HepG2 (cell line): ENCODE measurements at regions of chr9 and their contacts with region 1.

Region 1: GRCh38 chr9:36023260-36024048 is 13.3 kb upstream of the RECK start:
- DNase-seq: peak; percentile 39
- ATAC-seq: peak; percentile 90
- H3K4me3 ChIP-seq: no peak overlapping the region
- H3K27ac ChIP-seq: no peak overlapping the region
- H3K4me1 ChIP-seq: no peaks in the 10 kb centered on the region; the same call in 1 of the 2 replicates
- H3K27me3 ChIP-seq: no peaks in the 10 kb centered on the region
- CTCF ChIP-seq: peak; percentile 86
- EP300 ChIP-seq: no peak
- POLR2A ChIP-seq: no peak
- RAD21 ChIP-seq: peak; percentile 71

Region 2: DNA sequence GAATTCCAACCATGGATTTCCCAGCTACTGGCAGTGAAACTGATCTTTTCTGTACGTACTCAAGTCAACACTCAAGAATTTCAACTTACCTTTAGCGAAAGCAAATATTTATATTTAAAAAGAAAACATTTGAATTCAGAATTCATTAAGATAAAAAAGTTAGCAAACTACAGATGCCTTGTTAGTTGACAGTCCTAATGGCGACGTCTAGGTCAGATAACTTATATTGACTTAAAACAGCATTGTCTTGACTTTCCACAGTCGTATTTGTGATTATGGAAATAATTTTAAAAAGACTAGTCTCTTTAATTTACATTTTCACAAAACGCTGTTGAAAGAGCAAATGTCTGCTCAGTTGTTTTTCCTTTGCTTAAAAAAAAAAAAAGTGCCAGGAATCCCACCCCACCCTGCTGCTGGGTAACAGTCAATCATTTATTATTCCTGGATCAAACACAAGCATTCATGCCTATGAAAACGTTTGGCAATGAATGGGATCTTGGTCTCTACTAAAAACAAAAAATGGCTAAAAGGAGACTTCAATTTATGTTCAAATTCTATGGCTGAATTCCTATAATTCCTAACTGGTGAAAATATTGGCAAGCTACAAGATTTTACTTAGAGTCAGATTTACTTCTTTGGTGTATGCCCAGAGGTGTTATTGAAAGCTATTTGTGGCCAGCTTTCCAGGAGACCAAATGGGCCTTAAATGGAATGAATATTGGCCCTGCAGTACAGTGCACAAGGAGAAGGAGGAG is 87.5 kb before region 1 on chr9:
- CTCF ChIA-PET with region 1: no interaction called
- POLR2A ChIA-PET with region 1: no interaction called
- in situ Hi-C with region 1: no loop called
- intact Hi-C with region 1: no loop called
- DNase-seq: no peak
- ATAC-seq: no peak
- H3K4me3 ChIP-seq: no peak overlapping the region
- H3K27ac ChIP-seq: no peak overlapping the region
- H3K4me1 ChIP-seq: peaks cover 6% of the 10 kb centered on the region
- H3K27me3 ChIP-seq: peaks cover 0 to 6% of the 10 kb centered on the region in 2 experiments; a peak in 2 of 5 replicates
- CTCF ChIP-seq: no peak
- EP300 ChIP-seq: no peak
- POLR2A ChIP-seq: no peak
- RAD21 ChIP-seq: no peak

Region 3: GRCh38 chr9:35954942-35955546 is 68.4 kb before region 1 on chr9:
- CTCF ChIA-PET with region 1: interaction called, 17 read pairs
- POLR2A ChIA-PET with region 1: no interaction called
- in situ Hi-C with region 1: loop called (anchors 5 kb)
- intact Hi-C with region 1: loop called (anchors 2 kb)
- DNase-seq: peak; percentile 56
- ATAC-seq: peak; percentile 78
- H3K4me3 ChIP-seq: no peak overlapping the region
- H3K27ac ChIP-seq: no peak overlapping the region
- H3K4me1 ChIP-seq: no peaks in the 10 kb centered on the region
- H3K27me3 ChIP-seq: peaks cover 0 to 8% of the 10 kb centered on the region in 2 experiments; a peak in 3 of 5 replicates
- CTCF ChIP-seq: peak; percentile 85
- EP300 ChIP-seq: no peak
- POLR2A ChIP-seq: no peak
- RAD21 ChIP-seq: no peak

Region 4: DNA sequence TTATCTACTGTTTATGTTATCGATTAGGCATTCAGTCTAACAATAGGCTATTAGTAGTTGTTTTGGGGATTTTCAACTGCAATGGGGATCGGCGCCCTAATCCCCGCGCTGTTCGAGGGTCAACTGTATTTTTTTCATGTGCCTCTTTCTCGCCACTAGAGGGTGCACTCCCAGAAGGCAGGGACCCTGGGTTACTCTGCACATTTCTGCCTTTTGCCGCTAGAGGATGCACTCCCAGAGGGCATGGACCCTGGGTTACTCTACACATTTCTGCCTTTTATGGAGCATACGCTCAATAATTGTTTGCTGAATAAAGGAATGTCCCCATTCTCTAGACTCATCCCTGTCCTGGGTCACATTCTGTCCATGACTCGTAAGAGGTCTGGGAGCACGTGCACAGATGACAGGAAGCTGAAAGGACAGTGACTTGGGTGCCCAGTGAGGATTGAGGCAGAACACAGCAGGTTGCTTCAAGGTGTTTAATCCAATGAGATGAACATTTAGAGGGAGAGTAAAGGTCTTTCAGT is 14.6 kb before region 1 on chr9:
- CTCF ChIA-PET with region 1: interaction called, 24 read pairs
- POLR2A ChIA-PET with region 1: no interaction called
- in situ Hi-C with region 1: no loop called
- intact Hi-C with region 1: loop called (anchors 1 kb)
- DNase-seq: peak; percentile 74
- ATAC-seq: peak; percentile 97
- H3K4me3 ChIP-seq: no peak overlapping the region
- H3K27ac ChIP-seq: no peak overlapping the region
- H3K4me1 ChIP-seq: peaks cover 4% of the 10 kb centered on the region; the same call in 1 of the 2 replicates
- H3K27me3 ChIP-seq: peaks cover 0 to 2% of the 10 kb centered on the region in 2 experiments; a peak in 1 of 5 replicates
- CTCF ChIP-seq: peak; percentile 97
- EP300 ChIP-seq: no peak
- POLR2A ChIP-seq: no peak
- RAD21 ChIP-seq: peak; percentile 73

Region 5: DNA sequence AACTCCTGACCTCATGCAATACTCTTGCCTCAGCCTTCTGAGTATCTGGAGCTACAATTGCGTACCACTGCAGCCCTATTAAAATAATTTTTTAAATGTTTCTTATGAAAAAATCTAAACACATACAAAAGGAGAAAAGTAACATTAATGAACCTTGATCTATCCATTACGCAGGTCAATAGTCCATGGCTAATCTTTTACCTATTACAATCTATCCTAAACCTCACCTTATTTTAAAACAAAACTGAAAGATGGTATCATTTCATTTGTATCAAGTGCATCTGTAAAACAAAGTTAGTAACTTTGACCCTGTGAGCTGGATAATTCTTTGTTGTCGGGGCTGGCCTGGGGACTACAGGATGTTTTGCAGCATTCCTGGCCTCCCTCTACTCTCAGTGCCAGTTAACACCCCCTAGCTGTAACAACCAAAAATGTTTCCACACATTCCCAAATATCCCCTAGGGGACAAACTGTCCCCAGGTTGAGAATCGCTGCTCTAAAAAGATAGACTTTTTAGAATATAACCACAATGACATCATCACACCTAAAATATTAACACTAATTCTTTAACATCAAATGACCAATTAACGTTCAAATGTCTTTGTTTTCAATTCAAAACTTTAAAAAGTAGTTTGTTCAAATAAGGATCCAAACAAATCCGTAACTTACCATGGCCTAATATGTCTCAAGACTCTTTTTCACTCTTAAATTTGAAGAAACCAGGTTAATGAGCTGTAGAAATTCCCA is 321.8 kb after region 1 on chr9:
- CTCF ChIA-PET with region 1: no interaction called
- POLR2A ChIA-PET with region 1: no interaction called
- in situ Hi-C with region 1: no loop called
- intact Hi-C with region 1: no loop called
- DNase-seq: no peak
- ATAC-seq: peak; percentile 60
- H3K4me3 ChIP-seq: no peak overlapping the region
- H3K27ac ChIP-seq: no peak overlapping the region
- H3K4me1 ChIP-seq: peaks cover 7% of the 10 kb centered on the region
- H3K27me3 ChIP-seq: no peaks in the 10 kb centered on the region
- CTCF ChIP-seq: 0 out of 2 replicates have a peak, but pooled peaks have one; percentile 15
- EP300 ChIP-seq: no peak
- POLR2A ChIP-seq: no peak
- RAD21 ChIP-seq: no peak

Region 6: DNA sequence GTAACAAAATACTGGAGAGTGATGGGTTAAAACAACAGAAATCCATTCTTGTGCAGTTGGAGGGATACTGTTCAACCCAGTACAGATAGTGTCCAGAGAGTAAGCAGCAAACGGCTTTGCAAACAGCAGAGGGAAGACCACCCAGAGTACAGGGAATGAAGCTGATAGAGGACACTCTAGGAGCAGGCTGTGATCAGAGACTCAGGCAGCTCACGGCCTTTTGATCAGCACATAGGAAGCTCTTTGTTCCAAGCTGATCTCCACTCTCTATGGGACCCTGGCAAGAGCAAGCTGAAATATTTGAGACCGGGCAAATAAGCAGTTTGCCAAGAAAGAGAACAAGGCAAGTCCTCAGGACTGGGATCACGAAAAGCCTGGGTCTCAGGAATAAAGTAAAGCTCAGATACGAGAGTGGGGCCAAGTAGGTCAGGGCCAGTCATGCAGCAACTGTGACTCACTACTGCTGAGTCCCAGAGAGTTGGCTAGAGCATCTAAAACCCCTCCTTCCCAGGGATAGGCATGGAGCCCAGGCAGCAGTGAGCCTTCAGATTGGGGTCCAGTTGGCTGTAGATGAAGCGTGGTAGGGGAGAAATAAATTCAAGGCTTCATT is 601.7 kb after region 1 on chr9:
- CTCF ChIA-PET with region 1: no interaction called
- POLR2A ChIA-PET with region 1: no interaction called
- in situ Hi-C with region 1: no loop called
- intact Hi-C with region 1: no loop called
- DNase-seq: no peak
- ATAC-seq: no peak; the same call in 2 of the 3 replicates
- H3K4me3 ChIP-seq: no peak overlapping the region
- H3K27ac ChIP-seq: no peak overlapping the region
- H3K4me1 ChIP-seq: peaks cover 7% of the 10 kb centered on the region; the same call in 1 of the 2 replicates
- H3K27me3 ChIP-seq: no peaks in the 10 kb centered on the region
- CTCF ChIP-seq: no peak
- EP300 ChIP-seq: no peak
- POLR2A ChIP-seq: no peak
- RAD21 ChIP-seq: no peak